Transverse colon (tissue), 4 donors: ENCODE measurements at regions of chr17 and their contacts with region 1.

Region 1: DNA sequence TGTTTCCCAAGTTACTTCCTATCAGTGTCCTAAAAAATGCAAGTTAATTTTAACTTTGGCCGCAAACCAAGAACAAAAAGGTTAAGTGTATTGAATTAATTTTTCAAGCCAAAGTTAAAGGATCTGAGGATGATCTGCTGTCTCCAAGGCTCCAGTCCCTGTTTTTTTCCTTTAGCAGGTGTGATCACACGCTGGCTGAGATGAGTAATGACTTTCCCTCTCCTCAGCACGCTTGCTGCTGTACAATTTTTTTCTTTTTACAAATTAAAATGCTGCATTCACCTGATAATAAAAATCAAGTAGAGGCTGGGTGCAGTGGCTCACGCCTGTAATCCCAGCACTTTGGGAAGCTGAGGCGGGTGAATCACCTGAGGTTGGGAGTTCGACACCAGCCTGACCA is 3.9 kb upstream of the TNFSF12 start:
- DNase-seq: no peak
- H3K4me3 ChIP-seq: no peak overlapping the region
- H3K27ac ChIP-seq: no peak overlapping the region
- H3K4me1 ChIP-seq: peaks cover 7 to 19% (median 15%) of the 10 kb centered on the region in 4 donors
- H3K27me3 ChIP-seq: no peaks in the 10 kb centered on the region
- CTCF ChIP-seq: no peak
- EP300 ChIP-seq: no peak
- POLR2A ChIP-seq: no peak

Region 2: DNA sequence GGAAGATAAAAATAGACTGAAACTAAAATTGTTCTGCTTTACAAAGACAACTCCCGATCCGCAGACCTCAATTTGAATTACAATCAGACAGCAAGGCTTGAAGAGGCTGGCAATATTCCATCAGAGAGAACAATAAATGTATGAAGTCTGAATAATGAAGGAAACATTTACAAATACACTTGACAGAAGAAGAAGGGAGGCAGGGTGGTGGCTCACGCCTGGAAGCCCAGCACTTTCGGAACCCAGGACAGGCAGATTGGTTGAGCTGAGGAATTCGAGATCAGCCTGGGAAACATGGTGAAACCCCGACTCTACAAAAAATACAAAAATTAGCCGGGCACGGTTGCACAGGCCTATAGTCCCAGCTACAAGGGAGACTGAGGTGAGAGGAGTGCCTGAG is 809.3 kb after region 1 on chr17:
- in situ Hi-C with region 1: no loop called
- intact Hi-C with region 1: loop called (anchors 5 kb)
- DNase-seq: no peak
- H3K4me3 ChIP-seq: no peak overlapping the region
- H3K27ac ChIP-seq: no peak overlapping the region
- H3K4me1 ChIP-seq: no peaks in the 10 kb centered on the region
- H3K27me3 ChIP-seq: no peaks in the 10 kb centered on the region
- CTCF ChIP-seq: no peak
- EP300 ChIP-seq: no peak
- POLR2A ChIP-seq: no peak